Activated CD8-positive, alpha-beta T cell treated with anti-CD3 and anti-CD28 coated beads for 36 hours (primary cell): ENCODE measurements at regions of chr1 and their contacts with region 1.

Region 1: GRCh38 chr1:207963427-207964194 is 52.7 kb upstream of the CD34 start:
- DNase-seq: peak; percentile 85
- ATAC-seq: peak; percentile 91
- H3K4me3 Mint-ChIP-seq: peak overlapping the region; percentile 77
- H3K27ac Mint-ChIP-seq: peak overlapping the region; percentile 77
- H3K4me1 Mint-ChIP-seq: peaks cover 4% of the 10 kb centered on the region
- H3K27me3 Mint-ChIP-seq: peaks cover 22% of the 10 kb centered on the region
- CTCF ChIP-seq: peak; percentile 98

Region 2: GRCh38 chr1:207797229-207797961 is 166.2 kb before region 1 on chr1:
- CTCF ChIA-PET with region 1: interaction called, 13 read pairs
- POLR2A ChIA-PET with region 1: interaction called, 3 read pairs
- intact Hi-C with region 1: no loop called
- DNase-seq: peak; percentile 92
- ATAC-seq: peak; percentile 91
- H3K4me3 Mint-ChIP-seq: no peak overlapping the region
- H3K27ac Mint-ChIP-seq: peak overlapping the region; percentile 11
- H3K4me1 Mint-ChIP-seq: peaks cover 36% of the 10 kb centered on the region
- H3K27me3 Mint-ChIP-seq: no peaks in the 10 kb centered on the region
- CTCF ChIP-seq: peak; percentile 76

Region 3: GRCh38 chr1:207868774-207869721 is 94.6 kb before region 1 on chr1:
- CTCF ChIA-PET with region 1: interaction called, 41 read pairs
- POLR2A ChIA-PET with region 1: interaction called, 5 read pairs
- intact Hi-C with region 1: no loop called
- DNase-seq: peak; percentile 67
- ATAC-seq: peak; percentile 52
- H3K4me3 Mint-ChIP-seq: peak overlapping the region; percentile 91
- H3K27ac Mint-ChIP-seq: peak overlapping the region; percentile 86
- H3K4me1 Mint-ChIP-seq: peaks cover 84% of the 10 kb centered on the region
- H3K27me3 Mint-ChIP-seq: no peaks in the 10 kb centered on the region
- CTCF ChIP-seq: peak; percentile 81

Region 4: DNA sequence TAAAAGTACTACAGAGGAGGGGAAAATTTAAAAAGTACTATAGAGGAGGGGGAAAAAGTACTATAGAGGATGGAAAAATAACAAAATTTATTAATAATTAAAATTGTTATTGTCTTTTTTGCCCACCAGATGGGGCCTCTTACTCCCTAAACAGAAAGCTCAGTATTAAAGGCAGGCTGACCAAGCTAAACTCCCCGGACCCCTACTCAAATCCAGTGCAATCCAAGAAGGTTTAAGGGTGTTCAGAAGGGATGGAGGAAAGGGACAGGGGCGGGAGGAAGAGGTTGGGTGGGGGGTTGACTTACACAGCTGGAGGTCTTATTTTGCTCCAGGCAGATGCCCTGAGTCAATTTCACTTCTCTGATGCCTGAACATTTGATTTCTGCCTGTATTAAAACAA is 66.4 kb before region 1 on chr1:
- CTCF ChIA-PET with region 1: interaction called, 20 read pairs
- POLR2A ChIA-PET with region 1: interaction called, 4 read pairs
- intact Hi-C with region 1: loop called (anchors 5 kb)
- DNase-seq: no peak
- ATAC-seq: no peak
- H3K4me3 Mint-ChIP-seq: no peak overlapping the region
- H3K27ac Mint-ChIP-seq: no peak overlapping the region
- H3K4me1 Mint-ChIP-seq: no peaks in the 10 kb centered on the region
- H3K27me3 Mint-ChIP-seq: no peaks in the 10 kb centered on the region
- CTCF ChIP-seq: no peak

Region 5: DNA sequence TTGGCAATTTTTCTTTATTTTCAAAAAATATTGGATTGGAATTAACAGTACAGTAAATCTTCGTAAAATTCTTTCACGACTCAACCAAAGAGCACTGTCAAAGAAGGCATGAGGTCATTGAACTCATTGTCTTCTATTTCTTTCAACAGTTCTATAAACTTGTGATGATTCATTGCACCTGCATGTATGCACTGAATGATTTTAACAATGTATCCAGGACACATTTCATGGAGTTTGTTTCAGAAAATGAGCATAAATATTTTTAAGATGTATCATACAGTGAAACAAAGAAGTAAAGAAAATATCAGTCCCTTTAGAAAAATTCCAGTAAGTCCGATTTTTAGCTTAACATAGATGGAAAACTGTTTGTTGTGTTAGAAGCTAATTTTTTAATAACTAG is 19.0 kb before region 1 on chr1:
- CTCF ChIA-PET with region 1: interaction called, 15 read pairs
- POLR2A ChIA-PET with region 1: no interaction called
- intact Hi-C with region 1: no loop called
- DNase-seq: no peak
- ATAC-seq: no peak
- H3K4me3 Mint-ChIP-seq: no peak overlapping the region
- H3K27ac Mint-ChIP-seq: no peak overlapping the region
- H3K4me1 Mint-ChIP-seq: no peaks in the 10 kb centered on the region
- H3K27me3 Mint-ChIP-seq: peaks cover 11% of the 10 kb centered on the region
- CTCF ChIP-seq: no peak